Panc1 (cell line): ENCODE measurements at regions of chr1 and their contacts with region 1.

Region 1: GRCh38 chr1:51157395-51157794 is 55.4 kb downstream of the C1orf185 start:
- DNase-seq: no peak
- ATAC-seq: no peak
- H3K4me3 ChIP-seq: no peak overlapping the region
- H3K27ac ChIP-seq: no peak overlapping the region
- H3K4me1 ChIP-seq: no peaks in the 10 kb centered on the region
- H3K27me3 ChIP-seq: no peaks in the 10 kb centered on the region
- CTCF ChIP-seq: no peak

Region 2: GRCh38 chr1:51088488-51088887 is 68.9 kb before region 1 on chr1:
- CTCF ChIA-PET with region 1: no interaction called
- POLR2A ChIA-PET with region 1: interaction called, 10 read pairs
- in situ Hi-C with region 1: no loop called
- intact Hi-C with region 1: no loop called
- DNase-seq: peak; percentile 5
- ATAC-seq: no peak
- H3K4me3 ChIP-seq: no peak overlapping the region
- H3K27ac ChIP-seq: no peak overlapping the region
- H3K4me1 ChIP-seq: no peaks in the 10 kb centered on the region
- H3K27me3 ChIP-seq: no peaks in the 10 kb centered on the region; the same call in 1 of the 2 replicates
- CTCF ChIP-seq: peak; percentile 39; the same call in 1 of the 2 replicates

Region 3: GRCh38 chr1:51119331-51119730 is 38.1 kb before region 1 on chr1:
- CTCF ChIA-PET with region 1: no interaction called
- POLR2A ChIA-PET with region 1: no interaction called
- in situ Hi-C with region 1: no loop called
- intact Hi-C with region 1: no loop called
- DNase-seq: no peak
- ATAC-seq: no peak
- H3K4me3 ChIP-seq: no peak overlapping the region
- H3K27ac ChIP-seq: no peak overlapping the region
- H3K4me1 ChIP-seq: no peaks in the 10 kb centered on the region
- H3K27me3 ChIP-seq: no peaks in the 10 kb centered on the region
- CTCF ChIP-seq: no peak

Region 4: GRCh38 chr1:51131185-51131584 is 26.2 kb before region 1 on chr1:
- CTCF ChIA-PET with region 1: no interaction called
- POLR2A ChIA-PET with region 1: no interaction called
- in situ Hi-C with region 1: no loop called
- intact Hi-C with region 1: no loop called
- DNase-seq: no peak
- ATAC-seq: no peak
- H3K4me3 ChIP-seq: no peak overlapping the region
- H3K27ac ChIP-seq: no peak overlapping the region
- H3K4me1 ChIP-seq: no peaks in the 10 kb centered on the region
- H3K27me3 ChIP-seq: no peaks in the 10 kb centered on the region
- CTCF ChIP-seq: no peak

Region 5: GRCh38 chr1:51518033-51518585 is 360.7 kb after region 1 on chr1:
- CTCF ChIA-PET with region 1: no interaction called
- POLR2A ChIA-PET with region 1: no interaction called
- in situ Hi-C with region 1: no loop called
- intact Hi-C with region 1: no loop called
- DNase-seq: no peak
- ATAC-seq: peak; percentile 52
- H3K4me3 ChIP-seq: peak overlapping the region; percentile 91 to 95
- H3K27ac ChIP-seq: peak overlapping the region; percentile 94
- H3K4me1 ChIP-seq: peaks cover 46% of the 10 kb centered on the region
- H3K27me3 ChIP-seq: no peaks in the 10 kb centered on the region
- CTCF ChIP-seq: no peak